A673 (cell line): ENCODE measurements at regions of chr12 and their contacts with region 1.

Region 1: GRCh38 chr12:123388177-123388947 is 4.4 kb downstream of the KMT5A start:
- DNase-seq: peak; percentile 85
- H3K4me3 ChIP-seq: peak overlapping the region; percentile 61
- H3K27ac ChIP-seq: peak overlapping the region; percentile 77
- H3K4me1 ChIP-seq: peaks cover 18% of the 10 kb centered on the region
- H3K27me3 ChIP-seq: no peaks in the 10 kb centered on the region
- CTCF ChIP-seq: no peak

Region 2: GRCh38 chr12:123180171-123180570 is 208.2 kb before region 1 on chr12:
- CTCF ChIA-PET with region 1: no interaction called
- POLR2A ChIA-PET with region 1: no interaction called
- intact Hi-C with region 1: no loop called
- DNase-seq: no peak
- H3K4me3 ChIP-seq: no peak overlapping the region
- H3K27ac ChIP-seq: no peak overlapping the region
- H3K4me1 ChIP-seq: no peaks in the 10 kb centered on the region
- H3K27me3 ChIP-seq: no peaks in the 10 kb centered on the region
- CTCF ChIP-seq: no peak

Region 3: GRCh38 chr12:123365025-123365917 is 23.1 kb before region 1 on chr12:
- CTCF ChIA-PET with region 1: interaction called, 11 read pairs
- POLR2A ChIA-PET with region 1: interaction called, 8 read pairs
- intact Hi-C with region 1: loop called (anchors 2 kb)
- DNase-seq: peak; percentile 100
- H3K4me3 ChIP-seq: peak overlapping the region; percentile 94
- H3K27ac ChIP-seq: peak overlapping the region; percentile 86
- H3K4me1 ChIP-seq: peaks cover 6% of the 10 kb centered on the region
- H3K27me3 ChIP-seq: no peaks in the 10 kb centered on the region
- CTCF ChIP-seq: peak; percentile 85

Region 4: GRCh38 chr12:123410041-123410412 is 21.7 kb after region 1 on chr12:
- CTCF ChIA-PET with region 1: no interaction called
- POLR2A ChIA-PET with region 1: interaction called, 13 read pairs
- intact Hi-C with region 1: no loop called
- DNase-seq: no peak
- H3K4me3 ChIP-seq: no peak overlapping the region
- H3K27ac ChIP-seq: no peak overlapping the region
- H3K4me1 ChIP-seq: no peaks in the 10 kb centered on the region
- H3K27me3 ChIP-seq: no peaks in the 10 kb centered on the region
- CTCF ChIP-seq: no peak

Region 5: DNA sequence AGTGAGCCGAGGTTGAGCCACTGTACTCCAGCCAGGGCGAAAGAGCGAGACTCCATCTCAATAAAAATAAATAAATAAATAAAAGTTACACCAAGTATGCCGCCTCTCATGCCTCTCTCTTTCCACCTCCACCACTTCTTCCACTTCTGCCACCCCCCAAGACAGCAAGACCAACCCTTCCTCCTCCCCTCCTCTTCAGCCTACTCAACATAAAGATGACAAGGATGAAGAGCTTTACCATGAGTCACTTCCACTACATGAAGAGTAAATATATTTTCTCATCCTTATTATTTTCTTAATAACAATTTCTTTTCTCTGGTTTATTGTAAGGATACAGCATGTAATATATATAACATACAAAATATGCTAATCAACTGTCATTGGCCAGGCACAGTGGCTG is 192.4 kb after region 1 on chr12:
- CTCF ChIA-PET with region 1: interaction called, 4 read pairs
- POLR2A ChIA-PET with region 1: interaction called, 6 read pairs
- intact Hi-C with region 1: loop called (anchors 5 kb)
- DNase-seq: no peak
- H3K4me3 ChIP-seq: no peak overlapping the region
- H3K27ac ChIP-seq: no peak overlapping the region
- H3K4me1 ChIP-seq: peaks cover 4% of the 10 kb centered on the region
- H3K27me3 ChIP-seq: no peaks in the 10 kb centered on the region
- CTCF ChIP-seq: no peak